ENCODE measurements at regions of chr7 and their contacts with region 1.

Region 1: GRCh38 chr7:28926871-28927597 is 31.1 kb downstream of the TRIL start:
- DNase-seq: peak; percentile 80
- ATAC-seq: peak; percentile 93 to 96

Region 2: GRCh38 chr7:29019896-29020295 is 92.9 kb after region 1 on chr7:
- intact Hi-C with region 1: loop called in 1 of 2 experiments (anchors 5 kb)
- DNase-seq: peak; percentile 50
- ATAC-seq: peak; percentile 71 to 73

Region 3: GRCh38 chr7:29105752-29106668 is 179.0 kb after region 1 on chr7:
- intact Hi-C with region 1: loop called (anchors 1 to 2 kb)
- DNase-seq: no peak
- ATAC-seq: peak; percentile 66 to 72

Region 4: DNA sequence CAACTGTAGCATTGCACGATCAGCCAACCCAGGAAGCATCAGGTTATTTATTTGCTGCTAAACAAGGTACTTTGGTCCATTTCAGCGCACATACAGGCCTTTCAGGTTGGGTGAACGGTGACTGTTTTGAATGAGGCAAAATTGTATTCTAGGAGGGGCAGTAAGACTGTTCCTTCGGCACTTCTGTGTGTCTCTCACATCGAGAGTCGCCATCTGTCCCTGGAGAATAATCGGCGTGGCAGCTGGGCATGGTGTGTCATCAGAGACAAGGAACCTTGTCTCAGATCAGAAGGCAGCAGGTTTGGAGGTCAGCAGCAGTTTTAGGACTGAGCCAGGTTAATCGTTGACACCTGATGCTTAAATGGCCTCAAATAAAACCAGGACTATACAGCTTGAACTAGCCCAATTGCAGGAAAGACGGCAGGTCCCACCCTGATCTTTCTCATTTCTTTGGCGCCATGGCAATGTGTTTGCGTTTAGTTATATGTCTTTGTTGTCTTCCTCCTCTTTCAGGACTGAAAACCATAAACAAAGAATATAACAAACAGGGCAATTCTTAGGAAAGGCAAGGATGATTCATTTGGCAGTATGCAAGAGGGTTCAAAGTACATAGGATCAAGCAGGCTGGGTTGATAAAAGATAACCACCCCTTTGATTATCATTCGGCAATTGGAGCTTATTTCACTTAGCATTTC is 544.6 kb after region 1 on chr7:
- intact Hi-C with region 1: no loop called
- DNase-seq: no peak
- ATAC-seq: no peak